Naive thymus-derived CD4-positive, alpha-beta T cell (primary cell): ENCODE measurements at regions of chr3 and their contacts with region 1.

Region 1: GRCh38 chr3:45105855-45106671 is 40.1 kb downstream of the CDCP1 start:
- DNase-seq: peak in 8 of 9 donors; percentile 42 to 85 (median 66)
- ATAC-seq: peak; percentile 79
- H3K4me3 ChIP-seq: no peak overlapping the region
- H3K4me3 Mint-ChIP-seq: peak overlapping the region; percentile 21 to 75 (median 56)
- H3K27ac ChIP-seq: no peak overlapping the region
- H3K27ac Mint-ChIP-seq: peak overlapping the region; percentile 30 to 88 (median 60)
- H3K4me1 ChIP-seq: peaks cover 50 to 66% of the 10 kb centered on the region in 2 donors
- H3K4me1 Mint-ChIP-seq: peaks cover 33 to 83% (median 74%) of the 10 kb centered on the region in 7 donors
- H3K27me3 ChIP-seq: no peaks in the 10 kb centered on the region
- H3K27me3 Mint-ChIP-seq: peaks cover 7 to 32% (median 9%) of the 10 kb centered on the region in 5 donors

Region 2: GRCh38 chr3:45043728-45044299 is 62.2 kb before region 1 on chr3:
- CTCF ChIA-PET with region 1: interaction called, 8 read pairs
- POLR2A ChIA-PET with region 1: interaction called, 3 read pairs
- intact Hi-C with region 1: loop called (anchors 2 to 5 kb)
- DNase-seq: no peak
- ATAC-seq: no peak
- H3K4me3 ChIP-seq: no peak overlapping the region
- H3K4me3 Mint-ChIP-seq: no peak overlapping the region
- H3K27ac ChIP-seq: no peak overlapping the region
- H3K27ac Mint-ChIP-seq: no peak overlapping the region
- H3K4me1 ChIP-seq: peaks cover 0 to 15% of the 10 kb centered on the region in 2 donors
- H3K4me1 Mint-ChIP-seq: peaks cover 2 to 24% (median 23%) of the 10 kb centered on the region in 7 donors
- H3K27me3 ChIP-seq: no peaks in the 10 kb centered on the region
- H3K27me3 Mint-ChIP-seq: peaks cover 4 to 36% (median 11%) of the 10 kb centered on the region in 5 donors

Region 3: GRCh38 chr3:45064512-45065372 is 41.3 kb before region 1 on chr3:
- CTCF ChIA-PET with region 1: no interaction called
- POLR2A ChIA-PET with region 1: no interaction called
- intact Hi-C with region 1: loop called in 1 of 2 experiments (anchors 5 kb)
- DNase-seq: peak in 1 of 9 donors; percentile 51
- ATAC-seq: peak; percentile 85
- H3K4me3 ChIP-seq: no peak overlapping the region
- H3K4me3 Mint-ChIP-seq: peak overlapping the region; percentile 11 to 81 (median 58)
- H3K27ac ChIP-seq: no peak overlapping the region
- H3K27ac Mint-ChIP-seq: peak overlapping the region in 1 of 9 donors; percentile 90
- H3K4me1 ChIP-seq: peaks cover 0 to 7% of the 10 kb centered on the region in 2 donors
- H3K4me1 Mint-ChIP-seq: peaks cover 12 to 32% (median 17%) of the 10 kb centered on the region in 7 donors
- H3K27me3 ChIP-seq: no peaks in the 10 kb centered on the region
- H3K27me3 Mint-ChIP-seq: peaks cover 0 to 7% (median 4%) of the 10 kb centered on the region in 5 donors

Region 4: DNA sequence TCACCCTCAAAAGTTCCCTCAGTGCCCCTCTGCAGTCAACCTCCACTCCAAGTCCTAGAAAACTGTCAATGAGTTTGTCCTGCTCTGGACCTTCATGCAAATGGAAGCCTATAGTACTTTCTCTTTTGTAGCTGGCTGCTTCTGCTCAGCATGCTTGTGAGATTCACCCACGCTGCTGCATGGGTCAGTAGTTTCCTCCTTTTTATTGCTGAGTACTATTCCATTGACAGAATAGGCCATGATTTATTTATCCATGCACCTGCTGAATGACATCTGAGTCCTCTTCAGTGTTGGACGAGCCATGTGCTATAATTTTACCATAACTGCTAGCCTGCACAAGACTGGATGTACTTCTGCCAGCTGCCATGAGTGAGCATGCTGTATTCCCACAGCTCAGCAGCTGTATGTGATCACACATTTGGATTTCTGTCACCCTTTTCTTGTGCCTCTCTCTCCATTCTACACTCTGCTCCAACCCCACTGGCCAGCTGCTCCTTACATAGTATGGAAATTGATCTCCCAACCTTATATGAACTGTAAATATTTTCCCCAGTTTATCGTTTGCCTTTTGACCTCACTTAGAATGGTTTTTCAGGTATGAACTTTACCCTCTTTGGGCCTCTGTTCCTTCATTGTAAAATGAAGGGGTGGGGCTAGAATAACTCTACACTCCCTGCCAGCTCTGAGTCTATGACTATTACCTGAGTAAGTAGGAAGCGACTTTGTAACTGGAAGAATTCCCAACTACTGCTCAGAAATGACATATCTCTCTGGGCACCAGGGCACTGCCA is 14.0 kb after region 1 on chr3:
- CTCF ChIA-PET with region 1: interaction called, 4 read pairs
- POLR2A ChIA-PET with region 1: interaction called, 13 read pairs
- intact Hi-C with region 1: loop called (anchors 1 kb)
- DNase-seq: no peak
- ATAC-seq: no peak
- H3K4me3 ChIP-seq: no peak overlapping the region
- H3K4me3 Mint-ChIP-seq: no peak overlapping the region
- H3K27ac ChIP-seq: no peak overlapping the region
- H3K27ac Mint-ChIP-seq: peak overlapping the region in 1 of 9 donors; percentile 23
- H3K4me1 ChIP-seq: peaks cover 17 to 22% of the 10 kb centered on the region in 2 donors
- H3K4me1 Mint-ChIP-seq: peaks cover 16 to 62% (median 27%) of the 10 kb centered on the region in 7 donors
- H3K27me3 ChIP-seq: peaks cover 0 to 3% of the 10 kb centered on the region in 2 donors
- H3K27me3 Mint-ChIP-seq: peaks cover 0 to 43% (median 0%) of the 10 kb centered on the region in 5 donors

Region 5: GRCh38 chr3:45145681-45146614 is 39.9 kb after region 1 on chr3 and contains the start of gene CDCP1:
- CTCF ChIA-PET with region 1: no interaction called
- POLR2A ChIA-PET with region 1: interaction called, 5 read pairs
- intact Hi-C with region 1: loop called (anchors 5 kb)
- DNase-seq: peak in 2 of 9 donors; percentile 7 to 26
- ATAC-seq: no peak
- H3K4me3 ChIP-seq: peak within 1 kb of the TSS; percentile 44
- H3K4me3 Mint-ChIP-seq: peak within 1 kb of the TSS; percentile 72 to 94 (median 88)
- H3K27ac ChIP-seq: no peak within 1 kb of the TSS
- H3K27ac Mint-ChIP-seq: peak within 1 kb of the TSS in 5 of 9 donors; percentile 27 to 77 (median 40)
- H3K4me1 ChIP-seq: peaks cover 4 to 13% of the 10 kb centered on the region in 2 donors
- H3K4me1 Mint-ChIP-seq: peaks cover 11 to 22% (median 17%) of the 10 kb centered on the region in 7 donors
- H3K27me3 ChIP-seq: peaks cover 0 to 10% of the 10 kb centered on the region in 2 donors
- H3K27me3 Mint-ChIP-seq: peaks cover 39 to 80% (median 43%) of the 10 kb centered on the region in 5 donors
- total RNA-seq, gene CDCP1: 0.05 to 7.2 (median 0.81) TPM

Region 6: GRCh38 chr3:45167011-45167911 is 61.2 kb after region 1 on chr3:
- CTCF ChIA-PET with region 1: no interaction called
- POLR2A ChIA-PET with region 1: interaction called, 3 read pairs
- intact Hi-C with region 1: loop called (anchors 1 kb)
- DNase-seq: peak; percentile 56 to 79 (median 74)
- ATAC-seq: peak; percentile 95
- H3K4me3 ChIP-seq: peak overlapping the region; percentile 33
- H3K4me3 Mint-ChIP-seq: peak overlapping the region; percentile 65 to 87 (median 78)
- H3K27ac ChIP-seq: peak overlapping the region; percentile 30
- H3K27ac Mint-ChIP-seq: peak overlapping the region; percentile 82 to 95 (median 90)
- H3K4me1 ChIP-seq: peaks cover 9 to 19% of the 10 kb centered on the region in 2 donors
- H3K4me1 Mint-ChIP-seq: peaks cover 16 to 56% (median 40%) of the 10 kb centered on the region in 7 donors
- H3K27me3 ChIP-seq: no peaks in the 10 kb centered on the region
- H3K27me3 Mint-ChIP-seq: peaks cover 0 to 3% (median 0%) of the 10 kb centered on the region in 5 donors

Region 7: GRCh38 chr3:45224824-45225464 is 118.9 kb after region 1 on chr3:
- CTCF ChIA-PET with region 1: no interaction called
- POLR2A ChIA-PET with region 1: no interaction called
- intact Hi-C with region 1: loop called in 1 of 2 experiments (anchors 5 kb)
- DNase-seq: peak in 4 of 9 donors; percentile 8 to 50 (median 20)
- ATAC-seq: peak; percentile 52
- H3K4me3 ChIP-seq: no peak overlapping the region
- H3K4me3 Mint-ChIP-seq: peak overlapping the region; percentile 84 to 89 (median 87)
- H3K27ac ChIP-seq: no peak overlapping the region
- H3K27ac Mint-ChIP-seq: peak overlapping the region in 3 of 9 donors; percentile 38 to 84 (median 66)
- H3K4me1 ChIP-seq: peaks cover 4 to 7% of the 10 kb centered on the region in 2 donors
- H3K4me1 Mint-ChIP-seq: peaks cover 10 to 16% (median 13%) of the 10 kb centered on the region in 7 donors
- H3K27me3 ChIP-seq: peaks cover 8 to 14% of the 10 kb centered on the region in 2 donors
- H3K27me3 Mint-ChIP-seq: peaks cover 71 to 82% (median 81%) of the 10 kb centered on the region in 5 donors